ENCODE measurements at regions of chr5 and their contacts with region 1.

Region 1: DNA sequence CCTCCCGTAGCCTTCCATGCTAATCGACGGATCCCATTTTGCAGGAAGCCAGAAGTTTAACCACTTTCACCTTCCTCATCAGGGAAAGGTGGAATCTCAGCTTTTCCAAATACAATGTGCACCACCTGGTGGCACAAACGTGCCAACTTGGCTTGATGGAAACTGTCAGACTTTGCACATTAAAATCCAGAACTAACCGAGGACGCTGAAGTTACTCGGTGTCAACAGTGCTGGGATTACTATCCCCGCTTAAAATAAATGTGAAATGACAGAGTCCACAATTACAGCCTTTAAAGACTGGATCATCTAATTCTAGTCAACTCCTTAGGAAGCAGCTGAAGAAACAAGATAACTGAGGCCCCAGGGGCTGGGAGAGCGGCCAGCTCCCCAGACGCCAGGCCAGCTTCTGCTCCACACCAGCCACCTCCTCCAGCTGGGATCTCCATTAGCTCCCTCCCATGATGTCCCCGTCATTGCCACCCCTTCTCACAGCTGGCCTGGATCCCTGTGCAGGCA is 50.1 kb upstream of the RETREG1 start:
- DNase-seq: peak; percentile 22
- H3K4me3 Mint-ChIP-seq: no peak overlapping the region
- H3K27ac Mint-ChIP-seq: no peak overlapping the region
- H3K4me1 Mint-ChIP-seq: no peaks in the 10 kb centered on the region
- H3K27me3 Mint-ChIP-seq: no peaks in the 10 kb centered on the region

Region 2: GRCh38 chr5:16489322-16489791 is 177.6 kb before region 1 on chr5:
- CTCF ChIA-PET with region 1: interaction called, 3 read pairs
- POLR2A ChIA-PET with region 1: no interaction called
- intact Hi-C with region 1: loop called (anchors 1 kb)
- DNase-seq: no peak
- H3K4me3 Mint-ChIP-seq: no peak overlapping the region
- H3K27ac Mint-ChIP-seq: no peak overlapping the region
- H3K4me1 Mint-ChIP-seq: peaks cover 5% of the 10 kb centered on the region
- H3K27me3 Mint-ChIP-seq: no peaks in the 10 kb centered on the region